Activated CD4-positive, alpha-beta T cell treated with anti-CD3 and anti-CD28 coated beads for 36 hours (primary cell): ENCODE measurements at regions of chr18 and their contacts with region 1.

Region 1: GRCh38 chr18:23406271-23406787 is 46.8 kb upstream of the RIOK3 start:
- DNase-seq: no peak
- ATAC-seq: no peak
- H3K4me3 Mint-ChIP-seq: no peak overlapping the region
- H3K27ac Mint-ChIP-seq: no peak overlapping the region
- H3K4me1 Mint-ChIP-seq: no peaks in the 10 kb centered on the region
- H3K27me3 Mint-ChIP-seq: no peaks in the 10 kb centered on the region

Region 2: DNA sequence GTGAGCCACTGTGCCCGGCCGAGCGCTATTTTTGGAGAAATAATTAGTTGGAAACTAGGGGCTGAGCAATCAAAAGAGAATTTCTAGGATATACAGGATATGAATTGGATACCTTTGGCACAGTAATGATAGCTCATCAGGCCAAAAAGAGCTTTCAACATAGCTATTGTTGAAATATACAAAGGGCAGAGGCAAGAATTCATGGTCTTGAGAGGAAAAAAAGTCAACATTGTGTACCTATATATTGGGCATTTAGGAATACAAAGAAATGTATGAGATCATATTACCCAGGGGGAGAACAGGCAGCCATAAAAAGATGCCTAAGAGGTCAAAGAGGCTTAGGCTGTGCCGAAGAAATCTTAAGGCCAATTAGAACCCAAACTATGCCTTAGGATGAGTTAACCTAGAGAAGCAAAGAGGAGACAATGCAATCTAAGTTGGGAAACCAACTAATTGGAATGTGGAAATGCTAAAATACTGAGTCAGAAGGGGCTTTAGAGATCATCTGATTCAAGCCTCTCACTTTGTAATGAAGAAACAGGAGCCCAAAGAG is 374.2 kb before region 1 on chr18:
- CTCF ChIA-PET with region 1: interaction called, 11 read pairs
- POLR2A ChIA-PET with region 1: no interaction called
- intact Hi-C with region 1: loop called (anchors 1 to 5 kb)
- DNase-seq: no peak
- ATAC-seq: no peak
- H3K4me3 Mint-ChIP-seq: no peak overlapping the region
- H3K27ac Mint-ChIP-seq: no peak overlapping the region
- H3K4me1 Mint-ChIP-seq: no peaks in the 10 kb centered on the region
- H3K27me3 Mint-ChIP-seq: no peaks in the 10 kb centered on the region

Region 3: GRCh38 chr18:23356915-23357601 is 49.3 kb before region 1 on chr18:
- CTCF ChIA-PET with region 1: no interaction called
- POLR2A ChIA-PET with region 1: no interaction called
- intact Hi-C with region 1: no loop called
- DNase-seq: no peak
- ATAC-seq: no peak
- H3K4me3 Mint-ChIP-seq: no peak overlapping the region
- H3K27ac Mint-ChIP-seq: no peak overlapping the region
- H3K4me1 Mint-ChIP-seq: peaks cover 24% of the 10 kb centered on the region
- H3K27me3 Mint-ChIP-seq: no peaks in the 10 kb centered on the region

Region 4: DNA sequence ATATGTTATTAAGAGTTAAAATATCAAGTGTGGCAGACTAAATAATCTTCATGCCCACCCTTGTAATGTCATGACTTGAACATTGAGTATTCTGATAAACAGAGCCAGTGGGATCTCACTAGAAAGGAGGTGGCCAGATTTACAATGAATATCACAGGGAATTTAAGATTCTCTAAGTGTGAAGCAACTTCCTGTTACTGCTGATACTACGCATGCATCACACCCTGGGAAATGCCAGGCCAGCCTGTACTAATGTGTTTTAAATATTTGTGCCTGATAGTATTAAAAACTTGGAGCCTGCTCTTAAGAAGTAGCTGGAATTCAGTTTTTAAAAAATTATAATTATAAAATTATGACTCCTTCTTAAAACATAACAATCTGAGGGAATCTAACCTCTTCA is 431.3 kb after region 1 on chr18:
- CTCF ChIA-PET with region 1: no interaction called
- POLR2A ChIA-PET with region 1: no interaction called
- intact Hi-C with region 1: no loop called
- DNase-seq: no peak
- ATAC-seq: no peak
- H3K4me3 Mint-ChIP-seq: no peak overlapping the region
- H3K27ac Mint-ChIP-seq: no peak overlapping the region
- H3K4me1 Mint-ChIP-seq: peaks cover 7% of the 10 kb centered on the region
- H3K27me3 Mint-ChIP-seq: no peaks in the 10 kb centered on the region